Panc1 (cell line): ENCODE measurements at regions of chr3 and their contacts with region 1.

Region 1: GRCh38 chr3:33883538-33883950 is 85.1 kb downstream of the PDCD6IP start:
- DNase-seq: peak; percentile 17
- ATAC-seq: peak; percentile 36; the same call in 1 of the 2 replicates
- H3K4me3 ChIP-seq: peak overlapping the region in 1 of 2 experiments; percentile 47; a peak in 2 of 4 replicates
- H3K27ac ChIP-seq: peak overlapping the region; percentile 39; the same call in 1 of the 2 replicates
- H3K4me1 ChIP-seq: peaks cover 5% of the 10 kb centered on the region
- H3K27me3 ChIP-seq: no peaks in the 10 kb centered on the region
- CTCF ChIP-seq: peak; percentile 53; the same call in 1 of the 2 replicates

Region 2: GRCh38 chr3:32743934-32744333 is 1139.6 kb before region 1 on chr3:
- CTCF ChIA-PET with region 1: no interaction called
- POLR2A ChIA-PET with region 1: interaction called, 11 read pairs
- in situ Hi-C with region 1: no loop called
- intact Hi-C with region 1: no loop called
- DNase-seq: no peak
- ATAC-seq: no peak
- H3K4me3 ChIP-seq: no peak overlapping the region
- H3K27ac ChIP-seq: no peak overlapping the region
- H3K4me1 ChIP-seq: no peaks in the 10 kb centered on the region
- H3K27me3 ChIP-seq: no peaks in the 10 kb centered on the region
- CTCF ChIP-seq: no peak